A549 (cell line): ENCODE measurements at regions of chr11 and their contacts with region 1.

Region 1: DNA sequence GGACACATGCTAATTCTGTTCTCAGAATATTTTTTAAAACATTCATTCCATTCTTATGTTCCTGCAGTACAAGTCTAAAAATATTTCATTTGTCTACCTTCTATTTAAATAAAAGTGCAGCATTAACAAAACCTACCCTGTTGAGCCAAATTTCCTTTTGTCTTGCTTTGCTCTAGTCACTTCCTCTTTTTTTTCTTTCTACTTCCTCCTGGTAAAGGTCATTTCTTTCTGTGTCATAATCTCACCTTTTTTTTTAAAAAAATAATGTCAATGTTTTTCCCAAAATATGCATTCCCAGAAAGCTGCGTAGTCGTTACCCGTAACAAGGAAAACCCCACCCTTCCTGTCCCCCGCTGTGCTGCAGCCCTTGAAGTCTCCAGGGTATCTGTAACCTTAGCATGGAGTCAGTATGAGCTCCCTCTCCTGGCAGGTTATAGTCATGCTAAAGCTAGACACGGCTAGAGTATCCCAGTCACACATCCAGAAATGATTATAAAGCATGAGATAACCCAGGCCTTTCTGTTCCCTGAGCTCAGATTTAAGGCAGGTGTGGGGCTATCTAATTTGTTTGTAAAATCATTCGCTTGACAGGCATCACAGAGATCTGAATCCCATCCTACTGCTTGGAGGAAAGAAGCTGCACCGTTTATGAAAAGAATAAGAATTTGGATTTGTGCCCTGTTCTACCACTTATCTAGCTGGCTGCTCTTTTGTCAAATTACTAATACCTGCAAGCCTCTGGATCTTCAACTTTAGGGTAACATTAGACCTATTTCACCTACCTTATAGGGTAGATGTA is 51.1 kb upstream of the EED start:
- DNase-seq: peak; percentile 87 to 89
- ATAC-seq: peak; percentile 100
- H3K4me3 ChIP-seq: peak overlapping the region; percentile 29
- H3K27ac ChIP-seq: peak overlapping the region; percentile 50 to 81
- H3K4me1 ChIP-seq: peaks cover 15% of the 10 kb centered on the region; the same call in 2 of the 3 replicates
- CTCF ChIP-seq: peak; percentile 85
- EP300 ChIP-seq: no peak
- POLR2A ChIP-seq: no peak
- RAD21 ChIP-seq: peak; percentile 78 to 83

Region 2: GRCh38 chr11:86052693-86053641 is 140.5 kb before region 1 on chr11:
- CTCF ChIA-PET with region 1: interaction called, 11 read pairs
- POLR2A ChIA-PET with region 1: interaction called, 3 read pairs
- DNase-seq: no peak
- ATAC-seq: no peak
- H3K4me3 ChIP-seq: no peak overlapping the region
- H3K27ac ChIP-seq: no peak overlapping the region
- H3K4me1 ChIP-seq: peaks cover 7% of the 10 kb centered on the region; the same call in 1 of the 3 replicates
- CTCF ChIP-seq: no peak
- EP300 ChIP-seq: no peak
- POLR2A ChIP-seq: no peak
- RAD21 ChIP-seq: no peak

Region 3: DNA sequence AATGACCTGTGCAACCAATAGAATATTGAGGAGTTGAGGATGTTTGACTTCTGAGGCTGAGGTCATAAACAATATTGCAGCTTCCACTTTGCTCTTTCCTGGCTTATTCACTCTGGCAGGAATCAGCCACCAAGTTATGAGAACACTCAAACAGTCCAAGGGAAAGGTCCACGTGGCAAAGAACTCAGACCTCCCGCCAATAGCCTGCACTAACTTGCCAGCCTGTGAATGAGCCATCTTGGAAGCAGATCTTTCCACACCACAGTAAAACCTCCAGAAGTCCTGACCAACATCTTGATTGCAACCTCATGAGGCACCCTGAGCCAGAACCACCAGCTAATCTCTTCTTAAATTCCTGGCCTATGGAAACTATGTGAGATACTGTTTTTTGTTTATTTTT is 101.9 kb before region 1 on chr11:
- CTCF ChIA-PET with region 1: no interaction called
- POLR2A ChIA-PET with region 1: no interaction called
- DNase-seq: no peak
- ATAC-seq: no peak
- H3K4me3 ChIP-seq: no peak overlapping the region
- H3K27ac ChIP-seq: no peak overlapping the region
- H3K4me1 ChIP-seq: no peaks in the 10 kb centered on the region
- CTCF ChIP-seq: no peak
- EP300 ChIP-seq: no peak
- POLR2A ChIP-seq: no peak
- RAD21 ChIP-seq: no peak

Region 4: GRCh38 chr11:86116386-86116726 is 77.1 kb before region 1 on chr11:
- CTCF ChIA-PET with region 1: interaction called, 12 read pairs
- POLR2A ChIA-PET with region 1: no interaction called
- DNase-seq: peak; percentile 52 to 69
- ATAC-seq: peak; percentile 79 to 89
- H3K4me3 ChIP-seq: 0 out of 3 replicates have a peak overlapping the region, but pooled peaks have one; percentile 2
- H3K27ac ChIP-seq: peak overlapping the region; percentile 58 to 85
- H3K4me1 ChIP-seq: peaks cover 37% of the 10 kb centered on the region
- CTCF ChIP-seq: no peak
- EP300 ChIP-seq: no peak
- POLR2A ChIP-seq: no peak
- RAD21 ChIP-seq: no peak

Region 5: GRCh38 chr11:86162239-86162638 is 31.3 kb before region 1 on chr11:
- CTCF ChIA-PET with region 1: interaction called, 47 read pairs
- POLR2A ChIA-PET with region 1: no interaction called
- DNase-seq: peak in 1 of 2 experiments; percentile 29
- ATAC-seq: peak in 1 of 2 experiments; percentile 52; a peak in 2 of 6 replicates
- H3K4me3 ChIP-seq: no peak overlapping the region
- H3K27ac ChIP-seq: peak overlapping the region; percentile 61 to 75
- H3K4me1 ChIP-seq: peaks cover 39% of the 10 kb centered on the region
- CTCF ChIP-seq: no peak
- EP300 ChIP-seq: no peak
- POLR2A ChIP-seq: no peak
- RAD21 ChIP-seq: no peak

Region 6: GRCh38 chr11:86174101-86175046 is 19.1 kb before region 1 on chr11:
- CTCF ChIA-PET with region 1: interaction called, 12 read pairs
- POLR2A ChIA-PET with region 1: interaction called, 3 read pairs
- DNase-seq: peak in 1 of 2 experiments; percentile 67
- ATAC-seq: peak; percentile 82 to 86
- H3K4me3 ChIP-seq: no peak overlapping the region
- H3K27ac ChIP-seq: peak overlapping the region; percentile 49 to 86
- H3K4me1 ChIP-seq: peaks cover 37% of the 10 kb centered on the region
- CTCF ChIP-seq: no peak
- EP300 ChIP-seq: peak in 1 of 2 experiments; percentile 29; a peak in 1 of 5 replicates
- POLR2A ChIP-seq: no peak
- RAD21 ChIP-seq: no peak